ENCODE measurements at regions of chr11 and their contacts with region 1.

Region 1: DNA sequence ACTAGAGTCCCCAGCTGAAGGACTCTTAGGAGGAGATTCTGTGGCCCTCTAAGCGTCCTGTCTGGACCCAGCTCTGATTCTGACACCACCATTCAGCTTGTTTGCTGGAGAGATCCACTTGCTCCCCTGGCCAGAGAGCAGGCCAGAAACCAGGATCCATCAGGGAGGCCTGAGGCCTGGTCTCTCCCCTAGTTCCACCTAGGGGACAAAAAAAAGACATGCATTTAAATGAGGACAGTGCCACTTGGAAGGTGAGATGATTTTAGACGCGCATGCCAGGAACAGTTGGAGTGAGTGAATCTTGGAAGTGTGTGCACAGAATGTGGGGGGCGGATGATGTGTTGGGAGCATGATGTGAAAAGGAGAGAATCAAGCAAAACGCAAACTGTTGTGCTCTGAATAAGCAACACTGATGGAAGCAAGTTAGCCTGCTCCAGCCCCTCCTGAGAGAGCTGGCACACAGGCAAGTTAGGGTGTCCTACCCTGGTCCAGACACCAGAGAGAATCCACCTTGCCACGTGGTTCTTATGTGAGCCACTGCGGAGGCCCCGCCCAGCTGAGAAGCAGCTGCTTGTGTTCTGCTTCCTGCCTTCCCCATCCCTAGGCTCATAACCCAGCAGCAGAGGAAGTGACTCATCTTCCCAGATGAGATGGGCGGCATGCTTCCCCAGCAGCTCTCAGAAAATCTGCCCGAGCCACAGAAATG is 8.0 kb upstream of the SLCO2B1 start:
- DNase-seq: peak; percentile 86
- H3K4me3 ChIP-seq: no peak overlapping the region
- H3K27ac ChIP-seq: no peak overlapping the region
- H3K4me1 ChIP-seq: peaks cover 10% of the 10 kb centered on the region
- H3K27me3 ChIP-seq: no peaks in the 10 kb centered on the region
- CTCF ChIP-seq: peak in 1 of 2 donors; percentile 3

Region 2: DNA sequence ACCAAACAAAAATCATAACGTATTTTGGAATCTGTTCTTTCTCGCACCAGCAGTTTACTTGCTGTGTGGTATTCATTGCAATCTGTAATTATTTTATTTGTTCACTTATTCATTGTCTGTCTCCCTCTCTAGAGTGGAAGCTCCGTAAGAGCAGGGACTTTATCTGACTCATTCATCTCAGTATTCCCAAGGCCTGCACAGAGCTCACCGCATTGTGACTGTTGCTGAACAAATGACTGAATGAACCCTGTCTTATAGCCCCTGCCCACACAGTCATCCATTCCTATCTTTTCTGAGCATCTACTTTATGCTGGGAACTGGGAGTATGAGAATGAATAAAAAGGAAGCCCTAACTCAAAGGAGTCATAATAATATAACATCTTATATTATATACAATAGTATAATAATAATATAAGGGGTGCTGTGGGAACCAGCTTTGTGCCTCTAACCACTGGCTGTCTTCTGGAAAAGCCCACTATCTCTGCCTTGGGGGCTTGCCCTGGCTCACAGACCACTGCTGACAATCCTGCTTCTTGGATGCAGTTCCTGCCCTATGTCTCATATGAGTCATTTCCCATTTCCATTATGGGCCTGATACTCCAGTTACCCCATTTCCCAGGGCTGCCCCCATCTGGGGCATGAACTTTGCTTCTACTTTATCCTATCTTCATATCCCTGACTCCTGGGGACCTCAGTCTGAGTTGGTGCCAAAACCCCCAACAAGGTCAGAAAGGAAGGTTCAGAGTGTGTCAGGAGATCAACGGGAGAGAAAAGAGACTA is 205.0 kb before region 1 on chr11:
- CTCF ChIA-PET with region 1: no interaction called
- dilution Hi-C with region 1: no loop called
- in situ Hi-C with region 1: no loop called
- intact Hi-C with region 1: no loop called
- DNase-seq: peak; percentile 20
- H3K4me3 ChIP-seq: no peak overlapping the region
- H3K27ac ChIP-seq: no peak overlapping the region
- H3K4me1 ChIP-seq: peaks cover 22% of the 10 kb centered on the region
- H3K27me3 ChIP-seq: no peaks in the 10 kb centered on the region
- CTCF ChIP-seq: no peak

Region 3: GRCh38 chr11:75103380-75104026 is 39.4 kb before region 1 on chr11:
- CTCF ChIA-PET with region 1: no interaction called
- dilution Hi-C with region 1: no loop called
- in situ Hi-C with region 1: no loop called
- intact Hi-C with region 1: no loop called
- DNase-seq: peak; percentile 34
- H3K4me3 ChIP-seq: no peak overlapping the region
- H3K27ac ChIP-seq: no peak overlapping the region
- H3K4me1 ChIP-seq: peaks cover 4% of the 10 kb centered on the region
- H3K27me3 ChIP-seq: no peaks in the 10 kb centered on the region
- CTCF ChIP-seq: no peak

Region 4: DNA sequence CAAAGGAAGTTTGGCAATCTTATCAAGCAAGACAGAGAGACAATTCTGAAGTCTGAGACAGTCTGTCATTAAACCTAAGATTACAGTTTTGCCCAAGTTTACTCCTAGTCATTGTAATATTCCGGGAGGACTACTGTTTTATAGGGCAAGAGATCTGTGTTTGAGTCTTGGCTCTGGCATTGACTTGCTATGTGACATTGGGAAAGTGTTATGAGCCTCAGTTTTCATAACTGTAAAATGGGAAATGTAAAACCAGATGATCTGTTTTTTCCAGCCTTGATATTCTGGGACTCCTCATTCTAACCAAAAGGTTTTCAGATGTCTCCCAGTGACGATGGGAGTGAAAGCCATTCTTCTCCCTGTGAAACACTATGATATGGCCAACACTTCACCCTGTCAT is 16.3 kb before region 1 on chr11:
- CTCF ChIA-PET with region 1: interaction called, 23 read pairs
- dilution Hi-C with region 1: no loop called
- in situ Hi-C with region 1: no loop called
- intact Hi-C with region 1: no loop called
- DNase-seq: no peak
- H3K4me3 ChIP-seq: no peak overlapping the region
- H3K27ac ChIP-seq: no peak overlapping the region
- H3K4me1 ChIP-seq: no peaks in the 10 kb centered on the region
- H3K27me3 ChIP-seq: no peaks in the 10 kb centered on the region
- CTCF ChIP-seq: no peak

Region 5: DNA sequence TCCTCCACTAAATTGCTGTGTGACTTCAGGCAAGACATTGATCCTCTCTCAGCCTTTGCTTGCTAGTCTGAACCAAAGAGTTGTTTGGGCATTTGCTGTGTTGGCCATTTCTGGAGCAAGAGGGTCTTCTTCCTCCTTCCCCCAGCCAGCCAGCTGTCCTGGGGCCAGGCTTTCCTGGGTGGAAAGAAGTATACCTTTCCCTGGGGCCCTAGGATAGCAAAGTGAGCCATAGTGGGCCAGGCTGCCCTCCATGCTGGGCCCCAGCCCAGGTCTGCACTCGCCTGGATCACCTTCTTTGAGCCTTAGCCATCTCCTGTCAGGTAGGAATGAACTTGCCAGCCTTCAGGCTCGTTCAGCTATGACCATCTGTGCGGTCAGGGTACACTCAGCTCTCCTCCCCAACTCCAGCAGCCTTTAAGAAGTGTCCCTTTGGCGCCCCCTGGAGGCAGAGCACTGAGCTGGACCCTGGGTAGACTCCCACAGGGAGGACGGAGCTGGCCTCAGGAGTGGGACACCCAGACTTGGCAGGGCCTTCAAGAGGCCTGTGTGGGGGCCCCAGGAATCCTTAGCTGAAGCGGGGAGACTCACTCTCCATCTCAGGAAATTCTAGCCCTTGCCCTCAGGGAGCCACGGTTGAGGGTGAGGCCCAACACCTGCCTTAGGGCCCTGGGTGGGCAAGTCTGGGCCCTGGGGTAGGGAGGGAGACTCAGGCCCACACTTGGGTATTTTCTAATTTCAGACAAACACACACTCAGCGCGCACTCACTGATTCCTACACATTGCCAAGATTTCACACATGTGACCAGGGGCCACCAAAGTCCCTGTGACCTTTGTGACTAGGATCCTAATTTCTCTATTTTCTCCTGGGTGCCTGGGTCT is 62.1 kb after region 1 on chr11:
- CTCF ChIA-PET with region 1: interaction called, 34 read pairs
- dilution Hi-C with region 1: loop called (anchors 5 kb)
- in situ Hi-C with region 1: loop called (anchors 5 to 10 kb)
- intact Hi-C with region 1: loop called (anchors 1 kb)
- DNase-seq: peak; percentile 72
- H3K4me3 ChIP-seq: no peak overlapping the region
- H3K27ac ChIP-seq: no peak overlapping the region
- H3K4me1 ChIP-seq: no peaks in the 10 kb centered on the region
- H3K27me3 ChIP-seq: no peaks in the 10 kb centered on the region
- CTCF ChIP-seq: peak; percentile 85 to 92

Region 6: DNA sequence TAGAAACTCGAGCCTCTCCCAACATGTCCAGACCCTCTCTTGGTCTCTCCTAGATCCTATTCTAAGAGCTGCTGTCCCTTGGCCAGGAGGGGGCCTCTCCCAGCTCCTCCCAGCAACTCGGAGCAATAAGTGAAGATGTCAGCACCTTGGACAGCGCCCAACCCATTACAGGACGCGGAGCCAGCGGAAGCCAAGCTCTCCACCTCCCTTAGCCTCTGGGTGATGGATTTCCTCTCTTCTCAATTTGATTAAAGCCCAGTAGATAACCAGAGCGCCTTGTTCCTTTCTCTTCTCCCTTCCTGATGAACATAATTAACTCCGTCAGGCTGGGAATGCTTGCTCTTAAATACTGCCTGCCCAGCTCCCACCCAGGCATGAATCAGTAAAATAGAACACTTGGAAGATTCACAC is 71.5 kb after region 1 on chr11:
- CTCF ChIA-PET with region 1: no interaction called
- dilution Hi-C with region 1: loop called (anchors 5 kb)
- in situ Hi-C with region 1: loop called in 1 of 2 experiments (anchors 10 kb)
- intact Hi-C with region 1: no loop called
- DNase-seq: peak; percentile 66
- H3K4me3 ChIP-seq: no peak overlapping the region
- H3K27ac ChIP-seq: no peak overlapping the region
- H3K4me1 ChIP-seq: no peaks in the 10 kb centered on the region
- H3K27me3 ChIP-seq: peaks cover 3% of the 10 kb centered on the region
- CTCF ChIP-seq: peak; percentile 26 to 53

Region 7: GRCh38 chr11:75248690-75249268 is 105.9 kb after region 1 on chr11:
- CTCF ChIA-PET with region 1: interaction called, 18 read pairs
- dilution Hi-C with region 1: no loop called
- in situ Hi-C with region 1: loop called (anchors 5 kb)
- intact Hi-C with region 1: loop called (anchors 1 kb)
- DNase-seq: peak; percentile 70
- H3K4me3 ChIP-seq: no peak overlapping the region
- H3K27ac ChIP-seq: no peak overlapping the region
- H3K4me1 ChIP-seq: no peaks in the 10 kb centered on the region
- H3K27me3 ChIP-seq: no peaks in the 10 kb centered on the region
- CTCF ChIP-seq: peak; percentile 100